ENCODE measurements at regions of chr10 and their contacts with region 1.

Region 1: DNA sequence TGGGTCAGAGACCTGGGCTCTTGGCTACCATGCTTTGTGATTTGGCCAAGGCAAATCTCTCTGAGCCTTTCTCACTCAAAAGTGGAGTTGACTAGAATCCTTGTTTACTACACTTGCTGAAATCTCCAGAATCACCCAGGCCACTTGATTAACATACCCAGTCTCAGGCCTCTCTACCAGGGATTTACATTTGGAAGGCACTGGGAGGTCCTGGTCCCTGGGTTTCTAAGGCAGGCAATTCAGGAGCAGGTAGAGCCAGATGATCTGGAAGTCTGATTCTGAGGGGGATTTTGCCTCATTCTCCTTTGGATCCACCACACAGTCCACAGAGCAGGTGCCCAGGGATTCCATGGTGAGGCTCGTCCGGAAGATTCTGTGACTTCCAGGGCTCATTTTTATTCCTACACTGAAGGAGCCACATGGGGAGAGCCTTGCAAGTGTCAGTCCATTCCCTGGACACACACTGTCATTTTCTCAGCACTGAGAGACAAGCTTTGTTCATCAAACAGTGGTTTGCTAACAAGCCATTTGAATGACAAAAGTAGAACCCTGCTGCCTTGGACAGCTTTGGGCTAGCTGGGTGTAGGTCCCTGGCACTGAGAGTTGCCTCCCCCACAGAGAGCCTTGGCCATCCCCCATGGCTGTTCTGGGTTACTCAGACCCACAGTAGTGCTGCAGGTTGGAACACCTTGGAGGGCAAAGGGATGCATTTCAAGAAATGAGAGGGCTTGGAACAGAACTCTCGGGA is 74.2 kb downstream of the NOC3L start:
- DNase-seq: no peak
- CTCF ChIP-seq: no peak

Region 2: GRCh38 chr10:94299417-94299816 is 10.9 kb after region 1 on chr10:
- CTCF ChIA-PET with region 1: interaction called, 10 read pairs
- POLR2A ChIA-PET with region 1: no interaction called
- DNase-seq: no peak
- CTCF ChIP-seq: no peak